ENCODE measurements at regions of chr10 and their contacts with region 1.

Region 1: DNA sequence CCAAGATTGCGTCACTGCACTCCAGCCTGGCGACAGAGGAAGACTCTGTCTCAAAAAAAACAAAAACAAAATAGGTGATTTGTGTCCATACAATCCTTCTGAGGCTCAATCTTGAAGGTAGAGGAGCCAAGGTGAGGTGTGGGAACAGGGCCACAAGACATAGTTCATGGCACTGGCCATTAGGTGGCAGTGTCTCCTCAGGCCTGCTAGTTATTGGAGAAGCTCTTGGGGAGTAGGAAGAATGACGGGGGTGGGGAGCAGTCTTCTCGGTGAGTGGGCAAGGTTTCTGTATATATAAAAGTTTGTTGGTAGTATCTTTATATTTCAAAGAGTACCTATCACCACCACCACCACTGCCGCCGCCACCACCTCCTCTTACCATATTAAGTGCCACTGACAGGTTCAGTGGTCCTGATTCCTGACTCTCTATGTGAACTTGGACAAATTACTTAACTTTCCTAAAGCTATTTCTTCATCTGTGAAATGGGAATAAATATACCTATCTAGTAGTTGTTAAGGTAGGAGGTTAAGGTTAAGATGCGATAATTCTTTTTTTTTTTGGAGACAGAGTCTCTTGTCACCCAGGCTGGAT is 24.0 kb downstream of the CCSER2 start:
- DNase-seq: peak; percentile 80
- ATAC-seq: peak; percentile 89
- H3K4me3 Mint-ChIP-seq: no peak overlapping the region
- H3K27ac Mint-ChIP-seq: no peak overlapping the region
- H3K4me1 Mint-ChIP-seq: peaks cover 49% of the 10 kb centered on the region
- H3K27me3 Mint-ChIP-seq: no peaks in the 10 kb centered on the region

Region 2: DNA sequence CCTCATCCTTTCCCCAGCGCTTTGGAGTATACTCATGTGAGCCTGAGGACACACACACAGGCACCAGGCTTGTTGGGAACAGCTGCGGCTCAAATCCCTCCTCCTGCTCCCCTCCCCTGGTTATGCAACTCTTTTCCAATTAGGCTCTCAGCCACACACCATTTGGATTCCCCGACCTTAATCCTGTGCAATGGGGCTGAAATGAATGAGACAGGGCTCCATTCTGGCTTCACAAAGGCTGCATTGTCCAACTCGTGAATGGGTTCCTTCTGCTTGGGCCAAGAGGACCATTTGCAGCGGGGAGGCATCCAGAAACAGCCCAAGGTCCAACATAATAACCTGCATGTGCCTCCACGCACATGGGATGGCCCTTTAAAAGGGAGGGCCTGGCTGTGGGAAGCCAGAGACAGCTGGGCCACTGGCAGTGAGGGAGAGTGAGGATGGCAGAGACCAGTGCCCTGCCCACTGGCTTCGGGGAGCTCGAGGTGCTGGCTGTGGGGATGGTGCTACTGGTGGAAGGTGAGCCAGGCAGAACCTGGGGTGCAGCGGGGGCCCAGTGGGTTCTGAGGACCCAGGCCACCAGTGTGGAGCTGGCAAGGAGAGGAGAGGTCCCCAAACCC is 107.6 kb before region 1 on chr10 and contains the start of gene RGR:
- CTCF ChIA-PET with region 1: no interaction called
- DNase-seq: no peak
- ATAC-seq: no peak
- H3K4me3 Mint-ChIP-seq: no peak within 1 kb of the TSS
- H3K27ac Mint-ChIP-seq: no peak within 1 kb of the TSS
- H3K4me1 Mint-ChIP-seq: no peaks in the 10 kb centered on the region
- H3K27me3 Mint-ChIP-seq: peaks cover 3% of the 10 kb centered on the region
- total RNA-seq, gene RGR: not detected

Region 3: GRCh38 chr10:84264611-84265141 is 87.7 kb before region 1 on chr10:
- CTCF ChIA-PET with region 1: interaction called, 13 read pairs
- DNase-seq: peak; percentile 79
- ATAC-seq: peak; percentile 90
- H3K4me3 Mint-ChIP-seq: no peak overlapping the region
- H3K27ac Mint-ChIP-seq: no peak overlapping the region
- H3K4me1 Mint-ChIP-seq: peaks cover 19% of the 10 kb centered on the region
- H3K27me3 Mint-ChIP-seq: peaks cover 42% of the 10 kb centered on the region

Region 4: GRCh38 chr10:84321902-84322301 is 30.4 kb before region 1 on chr10:
- CTCF ChIA-PET with region 1: no interaction called
- DNase-seq: no peak
- ATAC-seq: no peak
- H3K4me3 Mint-ChIP-seq: no peak overlapping the region
- H3K27ac Mint-ChIP-seq: no peak overlapping the region
- H3K4me1 Mint-ChIP-seq: peaks cover 7% of the 10 kb centered on the region
- H3K27me3 Mint-ChIP-seq: peaks cover 38% of the 10 kb centered on the region

Region 5: DNA sequence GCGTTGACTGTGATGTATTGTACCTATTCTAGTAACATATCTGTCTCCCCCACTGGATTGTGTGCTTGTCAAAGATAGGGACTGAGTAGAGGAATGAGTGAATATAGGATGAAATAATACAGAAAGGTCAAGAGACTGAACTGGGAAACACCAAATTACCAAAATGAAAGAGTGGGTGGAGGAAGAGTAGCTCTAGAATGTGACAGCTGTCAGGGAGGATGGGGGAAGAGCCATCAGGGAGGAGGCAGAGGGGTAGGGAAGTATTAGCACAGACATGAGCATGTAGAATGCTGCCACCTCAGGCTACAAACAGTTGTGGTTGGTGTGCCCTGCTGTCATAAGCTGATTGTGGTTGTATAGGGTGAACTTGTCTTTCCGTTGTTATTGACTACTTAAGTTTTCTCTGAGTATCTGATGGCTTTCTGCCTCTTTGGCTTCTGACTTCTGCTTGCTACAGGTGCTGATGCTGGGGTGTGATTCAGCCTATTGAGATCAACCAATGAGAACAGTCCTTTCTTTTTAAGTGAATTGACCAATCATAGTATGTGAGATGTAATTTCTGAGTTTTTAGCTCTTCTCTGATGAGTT is 18.4 kb before region 1 on chr10:
- CTCF ChIA-PET with region 1: interaction called, 13 read pairs
- DNase-seq: peak; percentile 83
- ATAC-seq: peak; percentile 74
- H3K4me3 Mint-ChIP-seq: peak overlapping the region; percentile 59
- H3K27ac Mint-ChIP-seq: peak overlapping the region; percentile 87
- H3K4me1 Mint-ChIP-seq: peaks cover 50% of the 10 kb centered on the region
- H3K27me3 Mint-ChIP-seq: no peaks in the 10 kb centered on the region

Region 6: DNA sequence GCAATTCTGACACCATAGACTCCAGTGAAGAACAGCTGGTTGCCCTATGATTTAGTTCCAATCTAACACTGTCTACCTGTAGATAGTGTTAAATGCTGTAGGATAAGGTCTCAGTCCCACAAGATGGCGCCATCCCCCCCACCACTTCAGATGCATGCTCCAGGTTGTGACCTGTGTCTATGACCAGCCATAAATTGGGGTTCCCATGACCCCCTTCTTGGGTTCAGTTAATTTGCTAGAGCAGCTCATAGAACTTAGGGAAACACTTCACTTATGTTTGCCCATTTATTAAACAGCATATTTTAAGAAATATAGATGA is 10.8 kb before region 1 on chr10:
- CTCF ChIA-PET with region 1: interaction called, 34 read pairs
- DNase-seq: no peak
- ATAC-seq: peak; percentile 37
- H3K4me3 Mint-ChIP-seq: no peak overlapping the region
- H3K27ac Mint-ChIP-seq: peak overlapping the region; percentile 67
- H3K4me1 Mint-ChIP-seq: peaks cover 55% of the 10 kb centered on the region
- H3K27me3 Mint-ChIP-seq: no peaks in the 10 kb centered on the region

Region 7: GRCh38 chr10:84365335-84365881 is 13.1 kb after region 1 on chr10:
- CTCF ChIA-PET with region 1: interaction called, 32 read pairs
- DNase-seq: no peak
- ATAC-seq: no peak
- H3K4me3 Mint-ChIP-seq: no peak overlapping the region
- H3K27ac Mint-ChIP-seq: no peak overlapping the region
- H3K4me1 Mint-ChIP-seq: peaks cover 35% of the 10 kb centered on the region
- H3K27me3 Mint-ChIP-seq: no peaks in the 10 kb centered on the region

Region 8: DNA sequence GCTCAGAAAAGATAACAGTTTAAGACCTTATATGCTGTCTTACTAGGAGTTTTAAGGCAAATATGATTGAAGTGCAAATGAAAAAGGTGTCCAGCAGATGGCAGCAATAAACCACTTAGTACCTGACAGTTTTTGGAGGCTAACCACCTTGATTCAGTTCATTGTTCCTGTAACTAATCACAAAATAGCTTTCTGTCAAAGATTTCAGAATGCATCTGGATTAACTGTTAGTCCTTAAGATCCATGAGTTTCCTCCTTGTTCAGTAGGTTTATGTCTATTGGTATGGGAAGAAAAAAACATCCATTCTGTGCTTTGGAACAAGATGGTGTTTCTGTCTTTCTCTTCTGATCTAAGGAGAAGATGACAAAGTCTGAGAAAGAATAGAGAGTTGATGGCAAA is 22.7 kb after region 1 on chr10:
- CTCF ChIA-PET with region 1: interaction called, 21 read pairs
- DNase-seq: no peak
- ATAC-seq: peak; percentile 45
- H3K4me3 Mint-ChIP-seq: no peak overlapping the region
- H3K27ac Mint-ChIP-seq: no peak overlapping the region
- H3K4me1 Mint-ChIP-seq: peaks cover 31% of the 10 kb centered on the region
- H3K27me3 Mint-ChIP-seq: no peaks in the 10 kb centered on the region